Tibial artery (tissue), 4 donors: ENCODE measurements at regions of chr19 and their contacts with region 1.

Region 1: DNA sequence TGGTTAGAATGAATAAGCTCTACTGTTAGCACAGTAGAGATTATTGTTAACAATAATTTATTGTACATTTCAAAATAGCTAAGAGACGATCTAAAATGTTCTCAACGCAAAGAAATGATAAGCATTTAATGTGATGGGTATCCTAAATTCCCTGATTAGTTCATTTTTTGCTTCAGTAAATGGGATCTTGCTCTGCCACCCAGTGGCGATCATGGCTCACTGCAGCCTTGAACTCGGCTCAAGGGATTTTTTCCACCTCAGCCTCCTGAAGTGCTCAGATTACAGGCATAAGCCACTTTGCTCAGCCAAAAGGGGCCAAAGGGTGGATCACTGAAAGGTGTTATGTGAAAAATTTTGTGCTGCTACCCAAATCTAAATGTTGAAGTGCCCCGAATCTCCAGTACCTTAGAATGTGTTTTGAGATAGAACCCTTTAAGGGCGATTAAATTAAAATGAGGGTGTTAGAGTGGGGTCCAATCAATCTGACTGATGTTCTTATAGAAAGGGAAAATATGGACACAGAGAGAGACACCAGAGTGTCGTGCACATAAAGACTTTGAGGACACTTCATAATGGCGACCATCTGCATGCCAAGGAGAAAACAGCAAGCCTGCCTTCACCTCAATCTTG is 31.5 kb upstream of the ZNF766 start:
- DNase-seq: peak; percentile 32 to 72
- H3K4me3 ChIP-seq: no peak overlapping the region
- H3K27ac ChIP-seq: no peak overlapping the region
- H3K4me1 ChIP-seq: no peaks in the 10 kb centered on the region
- H3K27me3 ChIP-seq: no peaks in the 10 kb centered on the region
- CTCF ChIP-seq: peak; percentile 81 to 92

Region 2: DNA sequence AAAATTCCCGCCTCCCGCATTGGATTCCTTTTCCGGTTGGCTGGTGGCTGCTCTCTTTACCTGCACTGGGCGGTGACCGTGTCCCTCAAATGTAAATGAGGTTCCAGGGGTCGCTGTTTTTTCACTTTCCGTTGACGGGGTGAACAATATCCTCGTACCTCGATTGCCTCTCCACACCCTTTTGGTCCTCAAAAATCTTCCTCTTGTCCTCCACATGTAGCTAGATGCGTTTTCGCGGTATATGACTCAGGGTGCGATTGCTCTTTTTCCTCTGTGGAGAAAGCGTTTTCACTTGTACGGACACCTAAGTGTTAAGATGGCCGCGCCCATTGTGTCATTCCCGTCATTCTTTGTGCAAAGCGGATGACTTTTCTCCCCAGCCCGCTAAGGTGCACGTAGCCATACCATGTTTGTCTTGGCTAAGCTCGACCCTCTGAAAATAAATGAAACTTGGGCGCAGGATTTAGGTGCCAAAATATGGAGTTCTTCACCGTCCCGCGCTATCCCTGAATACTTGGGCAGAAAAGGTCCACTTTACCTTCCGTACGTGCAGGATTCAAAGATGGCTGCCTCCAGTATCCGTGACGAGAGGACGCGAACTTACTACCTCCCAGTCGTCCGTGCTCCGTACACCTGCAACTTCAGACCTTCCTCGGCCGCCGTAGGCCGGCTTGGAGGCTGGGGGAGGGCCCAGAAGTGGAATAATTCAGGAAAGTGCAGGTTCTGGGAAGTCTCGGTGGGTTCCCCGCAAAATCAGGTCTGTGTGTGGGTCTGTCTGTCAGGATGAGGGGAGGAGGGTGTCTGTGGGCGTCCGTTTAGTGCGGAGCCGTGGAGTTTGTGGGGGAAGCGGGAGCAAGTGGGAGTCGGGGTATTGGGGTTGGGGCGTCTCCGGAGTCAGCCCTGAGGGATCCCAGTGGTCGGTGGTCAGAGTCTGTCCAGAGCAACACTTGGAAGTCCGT is 310.8 kb before region 1 on chr19 and contains the start of gene ZNF613:
- intact Hi-C with region 1: loop called (anchors 10 kb)
- DNase-seq: peak; percentile 87 to 92
- H3K4me3 ChIP-seq: peak within 1 kb of the TSS; percentile 86 to 90
- H3K27ac ChIP-seq: peak within 1 kb of the TSS; percentile 75 to 85
- H3K4me1 ChIP-seq: peaks cover 0 to 14% (median 10%) of the 10 kb centered on the region in 4 donors
- H3K27me3 ChIP-seq: no peaks in the 10 kb centered on the region
- CTCF ChIP-seq: peak in 1 of 2 experiments; percentile 12

Region 3: DNA sequence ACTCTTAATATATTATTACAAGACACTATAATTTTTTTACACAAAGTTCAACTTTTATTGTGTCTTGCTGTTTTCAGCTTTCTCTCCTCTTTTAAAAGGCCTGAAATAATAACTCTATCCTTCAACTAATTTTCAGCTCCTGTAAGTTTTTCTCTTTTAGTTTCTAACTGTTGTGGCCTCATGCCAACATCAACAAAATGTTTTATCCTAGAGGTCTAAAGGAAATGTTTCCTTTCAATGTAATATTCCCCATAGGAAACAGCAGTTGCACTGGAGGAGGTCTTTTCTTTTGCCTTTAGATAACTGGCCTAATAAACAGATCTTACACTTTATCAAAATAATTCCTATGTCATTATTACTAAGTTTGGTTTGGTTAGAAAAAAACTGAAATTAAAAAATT is 89.6 kb before region 1 on chr19:
- intact Hi-C with region 1: no loop called
- DNase-seq: no peak
- H3K4me3 ChIP-seq: no peak overlapping the region
- H3K27ac ChIP-seq: no peak overlapping the region
- H3K4me1 ChIP-seq: peaks cover 0 to 3% (median 0%) of the 10 kb centered on the region in 4 donors
- H3K27me3 ChIP-seq: no peaks in the 10 kb centered on the region
- CTCF ChIP-seq: no peak

Region 4: GRCh38 chr19:52171321-52172169 is 66.3 kb before region 1 on chr19 and contains the start of gene ZNF836:
- intact Hi-C with region 1: loop called (anchors 10 kb)
- DNase-seq: peak; percentile 88 to 95
- H3K4me3 ChIP-seq: peak within 1 kb of the TSS; percentile 89 to 90
- H3K27ac ChIP-seq: peak within 1 kb of the TSS; percentile 89 to 93
- H3K4me1 ChIP-seq: peaks cover 6 to 17% (median 11%) of the 10 kb centered on the region in 4 donors
- H3K27me3 ChIP-seq: no peaks in the 10 kb centered on the region
- CTCF ChIP-seq: no peak

Region 5: DNA sequence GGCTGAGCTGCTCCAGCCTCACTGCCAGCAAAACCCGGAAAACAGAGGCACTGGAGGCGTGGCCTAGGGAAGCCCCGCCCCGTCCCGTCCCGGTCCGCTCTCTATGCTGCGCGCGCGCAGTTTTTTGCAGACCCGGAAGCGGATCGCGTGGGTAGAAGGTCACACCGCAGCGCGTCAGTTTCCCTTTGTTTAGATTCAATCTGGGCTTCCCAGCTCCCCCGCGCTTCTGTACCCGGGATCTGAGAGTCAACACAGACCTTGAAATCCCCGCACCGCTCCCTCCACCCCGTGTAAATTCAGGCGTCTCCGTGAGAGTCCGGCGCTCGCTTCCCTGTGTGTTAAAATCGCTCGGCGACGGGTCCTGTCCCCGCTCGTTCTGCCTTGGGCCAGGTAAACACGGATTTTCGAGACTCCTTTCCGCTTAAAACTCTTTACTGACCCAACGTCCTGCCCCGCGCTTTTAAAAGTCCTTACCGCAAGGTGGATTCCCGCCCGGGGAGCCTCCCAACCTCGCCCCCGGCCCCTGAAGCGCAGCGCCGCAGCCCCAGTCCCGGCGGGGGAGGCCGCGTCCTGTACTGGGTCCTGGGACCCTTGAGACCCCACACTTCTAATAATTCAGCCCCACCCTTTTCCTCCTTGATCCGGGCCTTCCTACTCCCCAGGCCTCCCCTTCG is 98.4 kb after region 1 on chr19 and contains the start of gene ZNF610:
- intact Hi-C with region 1: no loop called
- DNase-seq: peak; percentile 83 to 93
- H3K4me3 ChIP-seq: peak within 1 kb of the TSS; percentile 69 to 84
- H3K27ac ChIP-seq: peak within 1 kb of the TSS; percentile 83 to 84
- H3K4me1 ChIP-seq: peaks cover 0 to 11% (median 8%) of the 10 kb centered on the region in 4 donors
- H3K27me3 ChIP-seq: no peaks in the 10 kb centered on the region
- CTCF ChIP-seq: no peak

Region 6: DNA sequence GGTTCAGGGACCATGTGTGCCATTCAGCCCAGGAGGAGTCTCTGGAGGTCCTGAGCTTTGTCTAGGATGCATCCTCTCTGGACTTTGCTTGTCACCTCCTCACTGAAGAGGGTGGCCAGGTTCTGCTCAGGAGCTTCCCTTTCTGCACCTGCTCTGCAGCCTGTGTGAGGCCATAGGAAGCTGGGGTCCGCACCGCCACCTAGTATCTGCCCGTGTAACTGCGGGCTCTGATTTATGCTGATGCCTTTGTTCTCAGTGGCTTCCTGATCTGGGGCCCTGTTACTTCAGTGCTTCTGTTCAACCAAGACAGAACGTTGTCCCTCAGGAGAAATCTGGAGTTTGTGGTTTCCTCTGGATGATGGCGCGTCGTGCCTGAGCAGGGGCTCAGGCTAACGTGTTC is 113.6 kb after region 1 on chr19:
- intact Hi-C with region 1: no loop called
- DNase-seq: no peak
- H3K4me3 ChIP-seq: no peak overlapping the region
- H3K27ac ChIP-seq: no peak overlapping the region
- H3K4me1 ChIP-seq: no peaks in the 10 kb centered on the region
- H3K27me3 ChIP-seq: no peaks in the 10 kb centered on the region
- CTCF ChIP-seq: no peak